Mammary epithelial cell (primary cell): ENCODE measurements at regions of chr10 and their contacts with region 1.

Region 1: GRCh38 chr10:102450194-102450938 is 977 bp downstream of the C10orf95 start:
- DNase-seq: peak; percentile 86
- H3K4me3 ChIP-seq: peak overlapping the region; percentile 44 to 95 (median 63)
- H3K27ac ChIP-seq: peak overlapping the region; percentile 28
- H3K4me1 ChIP-seq: peaks cover 20% of the 10 kb centered on the region
- H3K27me3 ChIP-seq: no peaks in the 10 kb centered on the region
- CTCF ChIP-seq: no peak

Region 2: GRCh38 chr10:101629837-101630632 is 820.3 kb before region 1 on chr10:
- CTCF ChIA-PET with region 1: no interaction called
- dilution Hi-C with region 1: no loop called
- in situ Hi-C with region 1: no loop called
- intact Hi-C with region 1: no loop called
- DNase-seq: no peak
- H3K4me3 ChIP-seq: no peak overlapping the region
- H3K27ac ChIP-seq: no peak overlapping the region
- H3K4me1 ChIP-seq: peaks cover 12% of the 10 kb centered on the region
- H3K27me3 ChIP-seq: no peaks in the 10 kb centered on the region
- CTCF ChIP-seq: no peak

Region 3: GRCh38 chr10:102324061-102324460 is 126.3 kb before region 1 on chr10:
- CTCF ChIA-PET with region 1: no interaction called
- dilution Hi-C with region 1: no loop called
- in situ Hi-C with region 1: no loop called
- intact Hi-C with region 1: no loop called
- DNase-seq: peak; percentile 49
- H3K4me3 ChIP-seq: no peak overlapping the region
- H3K27ac ChIP-seq: no peak overlapping the region
- H3K4me1 ChIP-seq: no peaks in the 10 kb centered on the region
- H3K27me3 ChIP-seq: no peaks in the 10 kb centered on the region
- CTCF ChIP-seq: no peak

Region 4: GRCh38 chr10:102394079-102394800 is 56.1 kb before region 1 on chr10:
- CTCF ChIA-PET with region 1: no interaction called
- dilution Hi-C with region 1: no loop called
- in situ Hi-C with region 1: no loop called
- intact Hi-C with region 1: no loop called
- DNase-seq: peak; percentile 98
- H3K4me3 ChIP-seq: peak overlapping the region; percentile 74 to 77 (median 76)
- H3K27ac ChIP-seq: peak overlapping the region; percentile 89
- H3K4me1 ChIP-seq: peaks cover 18% of the 10 kb centered on the region
- H3K27me3 ChIP-seq: no peaks in the 10 kb centered on the region
- CTCF ChIP-seq: no peak

Region 5: DNA sequence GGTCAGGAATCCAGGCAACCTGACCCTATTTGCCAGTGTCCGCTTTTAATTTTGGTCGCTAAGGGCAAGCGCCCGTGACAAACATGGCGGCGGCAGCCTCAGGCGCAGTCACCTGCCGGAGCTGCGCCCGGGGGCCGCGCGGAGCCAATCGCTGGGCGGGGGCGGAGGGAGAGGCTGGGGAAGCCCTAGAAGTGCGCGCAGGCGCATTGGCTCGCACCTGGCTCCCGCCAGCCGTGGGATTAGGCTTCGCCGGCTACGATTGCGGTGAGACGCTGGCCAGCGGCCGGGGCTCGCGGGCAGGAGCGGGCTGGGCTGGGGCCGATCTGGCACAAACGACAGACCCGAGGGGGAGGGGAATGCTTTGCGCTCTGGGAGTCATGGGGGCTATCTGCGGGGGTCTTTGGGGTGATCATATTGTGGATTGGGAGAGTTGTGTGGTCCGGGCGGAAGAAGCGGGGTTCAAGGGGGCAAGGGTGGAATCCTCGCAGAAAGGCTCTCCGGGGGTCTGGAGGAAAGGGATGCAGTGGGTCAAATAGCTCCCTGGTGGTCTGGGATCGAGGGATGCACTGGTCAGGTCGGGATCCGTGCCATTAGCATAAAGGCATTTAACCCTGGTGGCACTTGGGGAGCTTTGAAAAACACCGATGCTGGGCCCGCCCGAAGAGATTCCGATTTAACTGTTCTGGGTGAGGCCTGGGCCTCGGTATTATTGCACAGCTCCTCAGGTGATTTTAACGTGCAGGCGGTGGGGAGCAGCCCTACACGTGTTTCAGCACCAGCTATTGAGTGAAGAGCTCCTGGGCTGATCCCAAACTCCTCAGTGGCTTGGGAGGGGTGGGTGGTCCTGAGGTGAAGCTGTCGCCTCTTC is 11.1 kb after region 1 on chr10:
- CTCF ChIA-PET with region 1: no interaction called
- dilution Hi-C with region 1: no loop called
- in situ Hi-C with region 1: no loop called
- intact Hi-C with region 1: loop called (anchors 1 kb)
- DNase-seq: peak; percentile 88
- H3K4me3 ChIP-seq: peak overlapping the region; percentile 43 to 56 (median 54)
- H3K27ac ChIP-seq: peak overlapping the region; percentile 9
- H3K4me1 ChIP-seq: peaks cover 11% of the 10 kb centered on the region
- H3K27me3 ChIP-seq: no peaks in the 10 kb centered on the region
- CTCF ChIP-seq: no peak

Region 6: GRCh38 chr10:102583435-102584417 is 133.4 kb after region 1 on chr10:
- CTCF ChIA-PET with region 1: no interaction called
- dilution Hi-C with region 1: no loop called
- in situ Hi-C with region 1: no loop called
- intact Hi-C with region 1: no loop called
- DNase-seq: peak; percentile 66
- H3K4me3 ChIP-seq: no peak overlapping the region
- H3K27ac ChIP-seq: no peak overlapping the region
- H3K4me1 ChIP-seq: no peaks in the 10 kb centered on the region
- H3K27me3 ChIP-seq: no peaks in the 10 kb centered on the region
- CTCF ChIP-seq: peak; percentile 89 to 91